ENCODE measurements at regions of chr6 and their contacts with region 1.

Region 1: DNA sequence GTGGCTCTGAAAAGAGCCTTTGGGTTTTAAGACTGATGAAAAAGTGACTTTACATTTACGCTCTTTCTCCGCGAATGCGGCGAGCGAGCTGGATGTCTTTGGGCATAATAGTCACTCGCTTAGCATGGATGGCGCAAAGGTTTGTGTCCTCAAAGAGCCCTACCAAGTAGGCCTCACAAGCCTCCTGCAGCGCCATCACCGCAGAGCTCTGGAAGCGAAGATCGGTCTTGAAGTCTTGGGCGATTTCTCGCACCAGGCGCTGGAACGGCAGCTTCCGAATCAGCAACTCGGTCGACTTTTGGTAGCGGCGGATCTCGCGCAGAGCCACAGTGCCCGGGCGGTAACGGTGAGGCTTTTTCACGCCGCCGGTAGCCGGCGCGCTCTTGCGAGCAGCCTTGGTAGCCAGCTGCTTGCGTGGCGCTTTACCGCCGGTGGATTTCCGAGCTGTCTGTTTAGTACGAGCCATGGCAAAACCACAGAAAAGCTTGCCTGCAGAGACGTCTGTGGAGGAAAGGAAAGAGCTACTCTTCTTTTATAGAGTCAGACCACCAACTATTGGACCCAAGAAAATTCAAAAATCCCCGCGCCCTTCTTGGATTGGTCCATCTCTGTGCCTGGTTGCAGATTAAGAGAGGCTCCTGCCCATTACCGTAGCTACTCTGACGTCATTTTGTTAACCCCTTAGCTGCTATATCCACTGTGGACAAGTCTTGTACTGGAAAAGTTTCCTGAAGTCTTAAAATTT is 55.5 kb upstream of the HFE start:
- DNase-seq: peak; percentile 89
- CTCF ChIP-seq: peak; percentile 9

Region 2: GRCh38 chr6:25583099-25583498 is 448.7 kb before region 1 on chr6:
- CTCF ChIA-PET with region 1: no interaction called
- POLR2A ChIA-PET with region 1: no interaction called
- DNase-seq: no peak
- CTCF ChIP-seq: no peak

Region 3: GRCh38 chr6:25992413-25993037 is 39.2 kb before region 1 on chr6:
- CTCF ChIA-PET with region 1: interaction called, 22 read pairs
- POLR2A ChIA-PET with region 1: interaction called, 14 read pairs
- DNase-seq: peak; percentile 93
- CTCF ChIP-seq: peak; percentile 100

Region 4: DNA sequence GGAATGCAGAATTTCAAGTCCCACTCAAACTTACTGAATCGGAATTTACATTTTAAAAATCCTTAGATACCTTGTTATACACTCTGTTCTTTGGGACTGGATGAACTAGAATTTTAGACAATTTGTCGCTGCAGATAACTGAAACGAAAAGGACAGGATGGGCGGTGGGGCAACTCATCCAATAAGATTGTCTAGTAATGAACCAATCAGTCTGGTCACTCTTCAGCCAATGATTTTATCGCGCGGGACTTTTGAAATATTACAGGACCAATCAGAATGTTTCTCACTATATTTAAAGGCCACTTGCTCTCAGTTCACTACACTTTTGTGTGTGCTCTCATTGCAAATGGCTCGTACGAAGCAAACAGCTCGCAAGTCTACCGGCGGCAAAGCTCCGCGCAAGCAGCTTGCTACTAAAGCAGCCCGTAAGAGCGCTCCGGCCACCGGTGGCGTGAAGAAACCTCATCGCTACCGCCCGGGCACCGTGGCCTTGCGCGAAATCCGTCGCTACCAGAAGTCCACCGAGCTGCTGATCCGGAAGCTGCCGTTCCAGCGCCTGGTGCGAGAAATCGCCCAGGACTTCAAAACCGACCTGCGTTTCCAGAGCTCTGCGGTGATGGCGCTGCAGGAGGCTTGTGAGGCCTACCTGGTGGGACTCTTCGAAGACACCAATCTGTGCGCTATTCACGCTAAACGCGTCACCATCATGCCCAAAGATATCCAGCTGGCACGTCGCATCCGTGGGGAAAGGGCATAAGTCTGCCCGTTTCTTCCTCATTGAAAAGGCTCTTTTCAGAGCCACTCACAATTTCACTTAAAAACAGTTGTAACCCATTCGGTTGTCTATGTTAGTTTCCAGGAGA is 13.5 kb after region 1 on chr6:
- CTCF ChIA-PET with region 1: interaction called, 136 read pairs
- POLR2A ChIA-PET with region 1: interaction called, 140 read pairs
- DNase-seq: peak; percentile 88
- CTCF ChIP-seq: peak; percentile 12

Region 5: DNA sequence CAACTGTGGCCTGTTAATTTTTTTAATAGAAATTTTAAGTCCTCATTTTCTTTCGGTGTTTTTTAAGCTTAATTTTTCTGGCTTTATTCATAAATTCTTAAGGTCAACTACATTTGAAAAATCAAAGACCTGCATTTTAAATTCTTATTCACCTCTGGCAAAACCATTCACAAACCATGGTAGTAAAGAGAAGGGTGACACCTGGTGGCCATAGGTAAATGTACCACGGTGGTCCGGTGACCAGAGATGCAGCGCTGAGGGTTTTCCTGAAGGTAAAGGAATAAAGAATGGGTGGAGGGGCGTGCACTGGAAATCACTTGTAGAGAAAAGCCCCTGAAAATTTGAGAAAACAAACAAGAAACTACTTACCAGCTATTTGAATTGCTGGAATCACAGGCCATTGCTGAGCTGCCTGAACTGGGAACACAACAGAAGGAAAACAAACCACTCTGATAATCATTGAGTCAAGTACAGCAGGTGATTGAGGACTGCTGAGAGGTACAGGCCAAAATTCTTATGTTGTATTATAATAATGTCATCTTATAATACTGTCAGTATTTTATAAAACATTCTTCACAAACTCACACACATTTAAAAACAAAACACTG is 65.6 kb after region 1 on chr6:
- CTCF ChIA-PET with region 1: interaction called, 25 read pairs
- POLR2A ChIA-PET with region 1: no interaction called
- DNase-seq: peak; percentile 40
- CTCF ChIP-seq: peak; percentile 75

Region 6: GRCh38 chr6:26270903-26271667 is 239.3 kb after region 1 on chr6:
- CTCF ChIA-PET with region 1: interaction called, 3 read pairs
- POLR2A ChIA-PET with region 1: interaction called, 10 read pairs
- DNase-seq: peak; percentile 91
- CTCF ChIP-seq: no peak

Region 7: DNA sequence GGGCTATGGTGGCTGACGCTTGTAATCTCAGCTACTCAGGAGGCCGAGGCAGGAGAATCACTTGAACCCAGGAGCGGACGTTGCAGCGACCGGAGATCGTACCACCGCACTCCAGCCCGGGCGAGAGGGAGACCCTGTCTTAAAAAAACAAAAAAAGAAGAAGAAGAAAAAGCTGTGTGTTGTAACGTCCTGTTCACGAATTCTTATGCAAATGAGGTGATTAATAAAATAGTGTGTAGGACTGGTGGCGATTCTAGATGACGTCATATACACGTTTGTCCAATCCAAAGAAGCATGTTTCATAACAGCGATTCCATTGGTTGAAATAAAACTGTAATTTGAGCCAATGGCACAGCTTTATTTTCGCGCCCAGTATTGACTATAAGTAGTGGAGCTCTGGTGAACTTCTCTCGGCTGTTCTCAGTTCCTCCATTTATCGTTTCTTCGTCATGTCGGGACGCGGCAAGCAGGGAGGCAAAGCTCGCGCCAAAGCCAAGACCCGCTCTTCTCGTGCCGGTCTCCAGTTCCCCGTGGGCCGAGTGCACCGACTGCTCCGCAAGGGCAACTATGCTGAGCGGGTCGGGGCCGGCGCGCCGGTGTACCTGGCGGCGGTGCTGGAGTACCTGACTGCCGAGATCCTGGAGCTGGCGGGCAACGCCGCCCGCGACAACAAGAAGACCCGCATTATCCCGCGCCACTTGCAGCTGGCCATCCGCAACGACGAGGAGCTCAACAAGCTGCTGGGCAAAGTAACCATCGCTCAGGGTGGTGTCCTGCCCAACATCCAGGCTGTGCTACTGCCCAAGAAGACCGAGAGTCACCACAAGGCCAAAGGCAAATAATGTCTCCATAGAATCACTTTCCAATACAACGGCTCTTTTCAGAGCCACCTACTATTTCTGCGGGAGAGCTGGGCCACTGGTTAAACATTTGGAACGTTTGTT is 1833.4 kb after region 1 on chr6:
- CTCF ChIA-PET with region 1: no interaction called
- POLR2A ChIA-PET with region 1: interaction called, 11 read pairs
- DNase-seq: peak; percentile 89
- CTCF ChIP-seq: no peak